Aorta (tissue), 5 donors: ENCODE measurements at regions of chrX and their contacts with region 1.

Region 1: DNA sequence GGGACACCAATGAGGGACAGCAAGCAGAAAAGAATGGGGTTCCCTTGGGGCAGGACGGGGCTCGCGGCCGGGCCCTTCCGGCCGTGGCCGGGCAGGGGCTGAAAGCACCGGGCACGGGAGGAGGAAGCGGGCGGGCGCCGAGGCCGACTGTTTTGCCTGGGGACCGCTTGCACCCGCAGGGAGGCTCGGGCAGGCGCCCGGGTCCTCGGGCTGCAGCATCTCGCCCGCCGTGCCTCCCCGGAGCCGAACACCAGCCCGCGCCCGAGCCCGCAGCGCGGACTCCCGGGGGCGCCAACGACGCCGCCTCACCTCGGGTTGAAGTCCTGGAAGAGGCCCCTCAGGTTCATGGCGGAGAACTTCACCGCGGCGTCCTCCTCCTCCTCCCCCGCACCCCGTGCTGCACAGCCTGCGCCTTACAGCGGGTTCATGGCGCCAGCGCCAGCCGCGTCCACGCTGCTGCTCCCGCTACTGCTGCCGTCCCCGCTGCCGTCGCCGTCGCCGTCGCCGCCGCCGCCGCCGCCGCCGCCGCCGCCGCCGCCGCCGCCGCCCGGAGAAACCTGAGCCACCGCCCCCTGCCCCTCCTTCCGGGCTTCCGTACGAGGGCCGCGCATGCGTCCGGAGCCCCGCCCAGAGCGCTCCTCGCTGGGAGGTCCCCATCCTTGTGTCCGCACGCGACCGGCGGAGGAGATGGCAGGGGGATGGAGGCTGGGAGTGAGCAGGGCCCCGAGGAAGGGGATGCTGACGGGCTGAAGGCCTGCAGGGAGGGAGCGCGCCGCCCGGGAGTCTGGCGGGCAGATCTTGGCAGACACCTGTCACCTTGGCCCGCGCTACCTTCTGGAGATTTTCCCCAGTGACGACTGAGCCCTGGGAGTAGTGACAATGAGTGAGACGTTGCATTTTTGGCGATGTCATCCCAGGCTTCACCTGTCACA is at the start of gene TMEM185A:
- DNase-seq: peak; percentile 75 to 91
- ATAC-seq: peak; percentile 81
- H3K4me3 ChIP-seq: peak within 1 kb of the TSS; percentile 27 to 82
- H3K27ac ChIP-seq: no peak within 1 kb of the TSS
- H3K4me1 ChIP-seq: no peaks in the 10 kb centered on the region
- H3K27me3 ChIP-seq: no peaks in the 10 kb centered on the region
- total RNA-seq, gene TMEM185A: 22.7 to 34.6 TPM

Region 2: GRCh38 chrX:149522916-149523315 is 108.6 kb before region 1 on chrX:
- intact Hi-C with region 1: loop called in 1 of 2 experiments (anchors 5 kb)
- DNase-seq: no peak
- ATAC-seq: no peak
- H3K4me3 ChIP-seq: no peak overlapping the region
- H3K27ac ChIP-seq: no peak overlapping the region
- H3K4me1 ChIP-seq: no peaks in the 10 kb centered on the region
- H3K27me3 ChIP-seq: no peaks in the 10 kb centered on the region

Region 3: GRCh38 chrX:149568701-149569296 is 62.7 kb before region 1 on chrX:
- intact Hi-C with region 1: loop called (anchors 10 kb)
- DNase-seq: no peak
- ATAC-seq: no peak
- H3K4me3 ChIP-seq: no peak overlapping the region
- H3K27ac ChIP-seq: no peak overlapping the region
- H3K4me1 ChIP-seq: no peaks in the 10 kb centered on the region
- H3K27me3 ChIP-seq: no peaks in the 10 kb centered on the region

Region 4: GRCh38 chrX:149687996-149688395 is 56.5 kb after region 1 on chrX:
- intact Hi-C with region 1: no loop called
- DNase-seq: no peak
- ATAC-seq: no peak
- H3K4me3 ChIP-seq: no peak overlapping the region
- H3K27ac ChIP-seq: no peak overlapping the region
- H3K4me1 ChIP-seq: no peaks in the 10 kb centered on the region
- H3K27me3 ChIP-seq: no peaks in the 10 kb centered on the region

Region 5: GRCh38 chrX:149837639-149838038 is 206.1 kb after region 1 on chrX:
- intact Hi-C with region 1: no loop called
- DNase-seq: no peak
- ATAC-seq: no peak
- H3K4me3 ChIP-seq: no peak overlapping the region
- H3K27ac ChIP-seq: no peak overlapping the region
- H3K4me1 ChIP-seq: no peaks in the 10 kb centered on the region
- H3K27me3 ChIP-seq: no peaks in the 10 kb centered on the region